Prostate gland (tissue), 2 donors: ENCODE measurements at regions of chr10 and their contacts with region 1.

Region 1: DNA sequence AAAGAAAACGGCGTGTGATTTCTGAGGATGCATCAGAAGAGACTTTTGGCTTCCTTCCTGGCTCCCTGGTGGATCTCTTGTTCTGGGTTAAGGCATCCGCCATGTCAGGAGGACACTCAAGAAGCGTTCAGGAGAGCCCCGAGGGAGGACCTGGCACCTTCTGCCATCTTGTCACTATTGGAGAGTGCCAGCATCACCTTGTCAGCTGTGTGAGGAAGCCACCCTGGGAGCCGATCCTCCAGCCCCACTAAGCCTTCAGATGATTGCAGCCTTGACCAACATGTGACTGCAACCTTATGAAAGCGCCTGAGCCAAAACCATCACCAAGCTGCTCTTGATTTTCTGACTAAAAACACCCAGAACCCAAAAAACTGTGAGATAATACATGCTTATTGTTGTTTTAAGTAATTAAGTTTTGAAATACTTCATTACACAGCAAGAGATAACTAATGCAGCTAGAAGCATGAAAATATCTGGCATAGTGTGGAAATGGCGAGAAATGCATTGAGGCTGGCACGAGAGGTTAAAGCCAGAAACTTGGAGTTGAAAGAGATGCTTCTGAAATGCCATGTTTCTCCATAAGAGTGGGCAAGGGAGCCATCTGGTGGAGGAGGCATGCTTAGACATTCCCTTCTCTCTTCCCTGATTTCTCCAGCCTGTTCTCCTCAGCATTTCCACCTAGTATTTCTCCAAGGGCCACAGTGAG is 5.4 kb upstream of the ZFYVE27 start:
- DNase-seq: peak; percentile 71
- H3K4me3 ChIP-seq: no peak overlapping the region
- H3K27ac ChIP-seq: no peak overlapping the region
- H3K4me1 ChIP-seq: no peaks in the 10 kb centered on the region
- H3K27me3 ChIP-seq: no peaks in the 10 kb centered on the region
- CTCF ChIP-seq: peak; percentile 51 to 93 (median 82)
- POLR2A ChIP-seq: no peak

Region 2: DNA sequence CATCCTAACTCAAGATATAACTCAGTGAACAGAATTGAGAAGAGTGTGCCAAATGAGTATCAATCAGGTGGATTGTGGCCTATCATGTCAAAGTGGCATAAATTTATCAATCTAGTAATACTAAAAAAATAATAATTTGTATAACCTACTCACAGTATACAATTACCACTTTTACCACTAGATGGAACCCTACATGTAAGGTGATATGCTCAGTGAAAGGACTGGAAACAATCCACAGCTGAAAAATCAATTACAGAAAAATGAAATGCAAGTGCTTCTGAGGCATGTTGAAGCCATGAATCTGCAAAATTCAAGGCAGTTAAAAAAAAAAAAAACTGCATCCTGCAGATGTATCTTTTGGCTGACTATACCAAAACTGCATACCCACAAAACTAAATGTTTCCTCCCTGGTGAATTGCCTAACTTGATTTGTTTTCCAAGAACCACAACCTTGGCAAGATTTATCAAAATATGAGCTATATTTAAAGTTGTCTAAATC is 453.0 kb before region 1 on chr10:
- intact Hi-C with region 1: no loop called
- DNase-seq: no peak
- H3K4me3 ChIP-seq: no peak overlapping the region
- H3K27ac ChIP-seq: peak overlapping the region; percentile 28 to 42
- H3K4me1 ChIP-seq: no peaks in the 10 kb centered on the region
- H3K27me3 ChIP-seq: no peaks in the 10 kb centered on the region
- CTCF ChIP-seq: peak; percentile 14 to 79 (median 66)
- POLR2A ChIP-seq: no peak

Region 3: DNA sequence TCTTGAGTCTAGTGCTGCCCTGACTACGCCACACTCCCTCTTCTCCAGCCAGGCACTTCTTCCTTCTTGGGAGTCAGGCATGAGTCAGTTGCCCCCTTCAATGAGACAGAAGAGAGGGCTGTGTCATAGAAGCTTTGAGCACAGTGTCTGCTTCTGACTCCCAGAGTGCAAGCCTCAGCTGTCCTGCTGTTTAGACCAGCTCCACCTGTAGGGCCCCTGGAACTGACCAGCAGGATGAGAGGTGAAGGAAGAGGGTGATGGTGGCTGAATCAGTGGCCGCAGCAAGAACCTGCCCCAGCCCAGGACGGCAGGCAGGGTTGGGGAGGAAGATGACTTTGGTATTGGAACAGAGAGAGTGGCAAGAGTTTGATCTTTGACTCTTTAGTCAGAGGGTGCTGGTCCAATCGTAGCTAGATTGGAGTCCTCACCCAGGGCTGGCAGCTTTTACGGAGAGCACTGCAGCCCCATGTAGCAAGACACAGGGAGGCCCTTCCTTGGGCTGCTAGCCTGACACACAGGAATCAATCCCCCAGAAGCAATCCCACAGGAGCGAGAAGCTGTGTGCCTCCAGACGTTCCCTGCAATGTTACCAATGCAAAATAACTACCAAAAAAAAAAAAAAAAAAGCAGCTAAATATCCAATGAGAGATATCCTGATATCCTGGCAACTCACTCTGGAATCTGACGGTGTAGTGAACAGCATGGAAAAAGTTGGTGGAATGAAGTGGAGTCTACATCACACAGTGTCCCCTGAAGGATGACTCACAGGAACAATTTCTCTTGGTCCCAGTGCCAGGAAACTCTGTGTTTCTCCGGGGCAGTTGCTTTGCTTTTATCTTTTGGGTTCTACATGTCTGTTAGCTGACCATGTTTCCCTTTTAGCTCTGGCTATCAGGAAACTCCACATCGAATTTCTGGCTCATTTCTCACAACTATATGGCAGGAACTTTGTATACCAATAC is 135.1 kb before region 1 on chr10:
- intact Hi-C with region 1: no loop called
- DNase-seq: peak; percentile 34
- H3K4me3 ChIP-seq: no peak overlapping the region
- H3K27ac ChIP-seq: peak overlapping the region; percentile 53 to 55
- H3K4me1 ChIP-seq: no peaks in the 10 kb centered on the region
- H3K27me3 ChIP-seq: no peaks in the 10 kb centered on the region
- CTCF ChIP-seq: no peak
- POLR2A ChIP-seq: no peak

Region 4: DNA sequence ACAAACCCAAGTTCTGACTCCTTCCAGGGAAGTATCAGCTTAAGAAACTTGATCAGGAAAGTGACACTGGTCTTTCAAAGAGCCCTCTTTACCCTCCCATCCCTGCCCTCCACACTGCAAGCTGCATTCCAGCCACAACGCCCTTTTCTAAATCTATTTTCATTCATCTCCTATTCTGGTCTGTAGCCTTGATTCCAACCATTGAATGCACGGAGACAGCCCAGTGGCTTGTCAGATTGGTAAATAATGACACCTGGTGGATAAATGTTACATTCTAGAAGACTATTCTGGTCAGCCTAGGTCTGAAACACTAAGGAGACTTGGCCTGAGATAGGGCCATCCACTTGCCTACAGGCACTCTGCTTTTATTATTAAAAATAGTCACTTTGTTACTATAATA is 119.1 kb before region 1 on chr10:
- intact Hi-C with region 1: no loop called
- DNase-seq: peak; percentile 13
- H3K4me3 ChIP-seq: no peak overlapping the region
- H3K27ac ChIP-seq: no peak overlapping the region
- H3K4me1 ChIP-seq: no peaks in the 10 kb centered on the region
- H3K27me3 ChIP-seq: no peaks in the 10 kb centered on the region
- CTCF ChIP-seq: peak in 3 of 4 experiments; percentile 33 to 68 (median 65)
- POLR2A ChIP-seq: no peak

Region 5: DNA sequence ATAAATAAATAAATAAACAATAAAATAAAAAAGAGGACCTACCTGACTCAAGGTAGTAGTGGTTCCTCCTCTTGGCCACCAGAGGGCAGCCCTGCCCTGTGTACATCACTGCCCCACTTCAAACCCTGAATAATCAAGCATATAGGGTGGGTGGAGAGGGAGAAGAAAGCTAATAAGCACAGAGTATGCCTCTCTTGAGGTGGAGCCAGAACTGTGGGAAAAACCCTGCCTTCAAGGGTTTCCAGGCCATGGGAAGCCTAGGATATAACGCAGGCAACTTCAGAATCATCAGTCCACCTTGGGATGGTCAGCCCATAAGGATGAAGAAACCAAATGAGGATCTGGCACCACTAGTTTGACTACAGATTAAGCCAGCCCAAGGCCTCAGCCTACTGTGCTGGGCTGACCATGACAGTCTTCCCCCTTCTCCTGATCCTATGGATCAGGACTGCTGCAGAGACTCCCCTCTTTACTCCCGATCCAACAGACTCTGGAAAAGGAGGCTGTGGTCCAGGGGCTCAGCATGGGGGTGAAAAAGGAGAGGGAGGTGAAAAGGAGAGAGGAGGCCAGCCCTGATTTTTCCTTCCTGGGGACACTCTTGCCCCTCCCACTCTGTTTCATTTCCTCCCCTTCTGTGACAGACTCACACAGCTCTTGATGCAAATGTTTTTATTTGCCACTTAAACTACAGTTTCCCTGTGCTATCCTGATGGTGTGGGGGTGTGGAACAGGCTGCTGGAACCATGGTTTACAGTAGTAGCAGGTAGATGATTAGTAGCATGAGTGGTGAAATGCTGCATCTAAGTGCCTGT is 54.5 kb before region 1 on chr10:
- intact Hi-C with region 1: loop called (anchors 5 kb)
- DNase-seq: no peak
- H3K4me3 ChIP-seq: no peak overlapping the region
- H3K27ac ChIP-seq: no peak overlapping the region
- H3K4me1 ChIP-seq: no peaks in the 10 kb centered on the region
- H3K27me3 ChIP-seq: no peaks in the 10 kb centered on the region
- CTCF ChIP-seq: peak; percentile 84 to 89 (median 84)
- POLR2A ChIP-seq: no peak

Region 6: DNA sequence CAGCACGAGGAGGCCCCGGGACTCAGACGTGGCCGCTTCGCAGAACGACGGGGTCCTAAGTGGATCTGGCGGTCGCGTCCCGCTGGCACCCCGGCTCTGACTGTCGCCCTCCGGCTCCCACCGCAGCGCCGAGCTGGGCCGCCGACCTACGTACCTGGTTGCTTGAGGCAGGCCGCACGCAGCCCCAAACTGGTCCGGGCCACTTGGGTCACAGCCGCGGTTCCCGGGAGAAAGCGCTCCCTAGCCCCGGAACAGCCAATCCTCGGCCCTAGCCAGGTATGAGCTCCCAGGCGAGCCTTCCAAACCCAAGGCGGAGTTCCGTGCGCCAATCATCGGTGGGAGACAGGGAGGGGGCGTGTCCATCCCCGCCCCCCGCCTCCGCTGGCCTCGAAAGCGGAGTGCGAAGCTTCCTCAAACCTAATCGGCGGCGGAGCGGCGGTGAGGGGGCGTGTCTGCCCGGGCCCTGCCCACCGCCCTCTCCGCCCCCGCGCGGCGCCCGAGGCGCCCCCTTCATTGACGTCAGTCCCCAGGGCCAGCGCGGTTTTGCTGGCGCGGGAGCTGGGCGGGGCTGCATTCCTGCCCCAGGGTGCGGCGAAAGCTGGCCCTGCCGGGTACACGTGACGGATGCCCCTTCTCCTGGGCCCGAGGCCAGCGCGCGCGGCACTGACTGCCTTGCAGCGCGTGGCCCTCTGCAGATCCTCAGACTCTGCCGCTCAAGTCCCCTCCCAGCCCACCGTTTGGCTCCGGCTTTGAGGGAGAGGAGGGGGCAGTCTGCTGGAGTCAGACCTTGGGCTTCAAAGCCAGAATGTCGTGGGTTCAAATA is 44.3 kb before region 1 on chr10 and contains the start of gene AVPI1:
- intact Hi-C with region 1: no loop called
- DNase-seq: peak; percentile 98
- H3K4me3 ChIP-seq: peak within 1 kb of the TSS; percentile 51 to 64
- H3K27ac ChIP-seq: peak within 1 kb of the TSS; percentile 90 to 93
- H3K4me1 ChIP-seq: peaks cover 18% of the 10 kb centered on the region
- H3K27me3 ChIP-seq: no peaks in the 10 kb centered on the region
- CTCF ChIP-seq: peak in 1 of 4 experiments; percentile 17
- POLR2A ChIP-seq: peak; percentile 100
- total RNA-seq, gene AVPI1: 17.0 to 28.6 TPM